GM12878 (cell line): ENCODE measurements at regions of chr9 and their contacts with region 1.

Region 1: DNA sequence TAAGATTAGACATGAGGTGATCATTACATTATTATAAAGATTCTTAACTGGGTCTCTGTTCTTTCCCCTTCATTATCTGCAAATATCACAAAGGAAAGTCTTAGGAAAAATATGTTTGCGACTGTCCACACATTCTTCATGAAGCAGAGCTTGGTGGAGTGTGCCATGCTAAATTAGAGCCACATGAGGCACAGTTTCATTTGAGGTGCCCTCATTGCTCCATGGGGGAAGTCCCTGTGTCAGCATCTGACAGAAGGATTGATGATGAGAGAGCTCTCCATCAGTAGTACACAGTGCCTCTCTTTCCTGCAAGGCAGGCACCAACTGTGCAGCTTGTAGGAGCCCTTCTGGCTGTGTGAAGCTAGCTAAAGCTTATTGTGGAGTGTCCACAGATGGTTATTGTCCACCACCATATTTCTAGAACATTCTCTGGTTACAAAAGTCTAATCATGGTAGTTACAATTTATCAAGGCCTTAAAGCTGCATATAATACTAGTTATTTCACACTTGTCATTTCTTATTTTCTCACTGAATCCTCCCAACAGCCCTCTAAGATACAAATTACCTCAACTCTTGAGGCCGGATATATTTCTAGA is 63.9 kb downstream of the C9orf152 start:
- DNase-seq: no peak
- ATAC-seq: peak; percentile 79
- H3K4me3 ChIP-seq: peak overlapping the region; percentile 37; the same call in 1 of the 2 replicates
- H3K27ac ChIP-seq: peak overlapping the region; percentile 81
- H3K4me1 ChIP-seq: peaks cover 61% of the 10 kb centered on the region
- H3K27me3 ChIP-seq: no peaks in the 10 kb centered on the region
- CTCF ChIP-seq: peak in 2 of 3 experiments; percentile 16 to 21; a peak in 1 of 6 replicates
- EP300 ChIP-seq: no peak
- POLR2A ChIP-seq: peak; percentile 48; the same call in 1 of the 2 replicates
- RAD21 ChIP-seq: no peak

Region 2: GRCh38 chr9:109918339-109919163 is 225.5 kb before region 1 on chr9:
- CTCF ChIA-PET with region 1: interaction called, 597 read pairs
- POLR2A ChIA-PET with region 1: interaction called, 4 read pairs
- RAD21 ChIA-PET with region 1: interaction called, 16 read pairs
- SMC1A ChIA-PET with region 1: interaction called, 406 read pairs
- in situ Hi-C with region 1: no loop called
- intact Hi-C with region 1: no loop called
- DNase-seq: peak; percentile 80
- ATAC-seq: peak; percentile 73
- H3K4me3 ChIP-seq: peak overlapping the region; percentile 37; the same call in 1 of the 2 replicates
- H3K27ac ChIP-seq: peak overlapping the region; percentile 94
- H3K4me1 ChIP-seq: peaks cover 55% of the 10 kb centered on the region
- H3K27me3 ChIP-seq: no peaks in the 10 kb centered on the region
- CTCF ChIP-seq: no peak
- EP300 ChIP-seq: peak; percentile 71 to 92
- POLR2A ChIP-seq: no peak; the same call in none of the 2 replicates
- RAD21 ChIP-seq: peak; percentile 38; the same call in 1 of the 2 replicates

Region 3: GRCh38 chr9:110058304-110058953 is 85.6 kb before region 1 on chr9:
- CTCF ChIA-PET with region 1: interaction called, 237 read pairs
- POLR2A ChIA-PET with region 1: interaction called, 33 read pairs
- RAD21 ChIA-PET with region 1: interaction called, 84 read pairs
- SMC1A ChIA-PET with region 1: interaction called, 126 read pairs
- in situ Hi-C with region 1: no loop called
- intact Hi-C with region 1: loop called (anchors 2 kb)
- DNase-seq: no peak
- ATAC-seq: peak; percentile 83
- H3K4me3 ChIP-seq: peak overlapping the region; percentile 30; the same call in 1 of the 2 replicates
- H3K27ac ChIP-seq: no peak overlapping the region; the same call in 1 of the 2 replicates
- H3K4me1 ChIP-seq: peaks cover 19% of the 10 kb centered on the region
- H3K27me3 ChIP-seq: no peaks in the 10 kb centered on the region
- CTCF ChIP-seq: peak; percentile 63 to 74 (median 72)
- EP300 ChIP-seq: no peak
- POLR2A ChIP-seq: no peak
- RAD21 ChIP-seq: peak; percentile 98

Region 4: GRCh38 chr9:110105107-110105506 is 38.9 kb before region 1 on chr9:
- CTCF ChIA-PET with region 1: interaction called, 25 read pairs
- POLR2A ChIA-PET with region 1: interaction called, 30 read pairs
- RAD21 ChIA-PET with region 1: interaction called, 282 read pairs
- SMC1A ChIA-PET with region 1: interaction called, 122 read pairs
- in situ Hi-C with region 1: no loop called
- intact Hi-C with region 1: loop called (anchors 1 kb)
- DNase-seq: no peak
- ATAC-seq: no peak
- H3K4me3 ChIP-seq: no peak overlapping the region
- H3K27ac ChIP-seq: no peak overlapping the region
- H3K4me1 ChIP-seq: peaks cover 58% of the 10 kb centered on the region
- H3K27me3 ChIP-seq: no peaks in the 10 kb centered on the region
- CTCF ChIP-seq: no peak
- EP300 ChIP-seq: no peak
- POLR2A ChIP-seq: no peak
- RAD21 ChIP-seq: no peak

Region 5: DNA sequence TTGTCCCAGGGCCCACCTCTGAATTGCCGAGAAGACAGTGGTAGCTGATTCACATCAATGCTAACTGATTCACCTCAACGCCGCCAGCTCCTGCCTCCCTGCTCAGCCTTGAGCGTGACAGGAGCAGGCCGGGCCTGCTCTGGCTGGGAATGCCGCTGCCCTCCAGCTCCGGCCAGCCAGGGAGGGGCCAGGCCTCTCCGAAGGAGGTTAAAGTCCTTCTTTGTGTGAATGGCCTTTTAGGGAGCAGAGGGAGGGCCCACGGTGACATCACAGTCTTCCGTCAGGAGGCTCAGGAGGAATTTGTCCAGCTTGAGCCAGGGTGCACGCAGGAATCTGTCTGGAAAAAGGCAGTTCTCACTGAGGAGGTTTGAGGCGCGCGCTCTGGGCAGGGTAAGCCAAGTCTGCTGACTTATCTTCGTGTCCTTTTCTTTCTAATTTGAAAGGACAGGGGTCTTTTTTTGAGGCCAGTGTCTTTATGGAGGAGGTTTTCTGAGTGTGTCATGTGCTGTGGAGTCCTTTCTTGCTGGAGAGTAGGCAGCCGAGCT is 18.8 kb before region 1 on chr9:
- CTCF ChIA-PET with region 1: interaction called, 123 read pairs
- POLR2A ChIA-PET with region 1: interaction called, 262 read pairs
- RAD21 ChIA-PET with region 1: interaction called, 396 read pairs
- SMC1A ChIA-PET with region 1: interaction called, 460 read pairs
- in situ Hi-C with region 1: no loop called
- intact Hi-C with region 1: loop called (anchors 1 kb)
- DNase-seq: no peak
- ATAC-seq: no peak
- H3K4me3 ChIP-seq: no peak overlapping the region
- H3K27ac ChIP-seq: peak overlapping the region; percentile 29
- H3K4me1 ChIP-seq: peaks cover 58% of the 10 kb centered on the region
- H3K27me3 ChIP-seq: no peaks in the 10 kb centered on the region
- CTCF ChIP-seq: no peak
- EP300 ChIP-seq: no peak
- POLR2A ChIP-seq: no peak
- RAD21 ChIP-seq: no peak